ENCODE measurements at regions of chr6 and their contacts with region 1.

Region 1: GRCh38 chr6:52227495-52227894 is 16.8 kb downstream of the IL17F start:
- DNase-seq: peak; percentile 90
- H3K4me3 Mint-ChIP-seq: peak overlapping the region; percentile 27
- H3K27ac Mint-ChIP-seq: peak overlapping the region; percentile 32
- H3K4me1 Mint-ChIP-seq: peaks cover 46% of the 10 kb centered on the region
- H3K27me3 Mint-ChIP-seq: peaks cover 47% of the 10 kb centered on the region

Region 2: DNA sequence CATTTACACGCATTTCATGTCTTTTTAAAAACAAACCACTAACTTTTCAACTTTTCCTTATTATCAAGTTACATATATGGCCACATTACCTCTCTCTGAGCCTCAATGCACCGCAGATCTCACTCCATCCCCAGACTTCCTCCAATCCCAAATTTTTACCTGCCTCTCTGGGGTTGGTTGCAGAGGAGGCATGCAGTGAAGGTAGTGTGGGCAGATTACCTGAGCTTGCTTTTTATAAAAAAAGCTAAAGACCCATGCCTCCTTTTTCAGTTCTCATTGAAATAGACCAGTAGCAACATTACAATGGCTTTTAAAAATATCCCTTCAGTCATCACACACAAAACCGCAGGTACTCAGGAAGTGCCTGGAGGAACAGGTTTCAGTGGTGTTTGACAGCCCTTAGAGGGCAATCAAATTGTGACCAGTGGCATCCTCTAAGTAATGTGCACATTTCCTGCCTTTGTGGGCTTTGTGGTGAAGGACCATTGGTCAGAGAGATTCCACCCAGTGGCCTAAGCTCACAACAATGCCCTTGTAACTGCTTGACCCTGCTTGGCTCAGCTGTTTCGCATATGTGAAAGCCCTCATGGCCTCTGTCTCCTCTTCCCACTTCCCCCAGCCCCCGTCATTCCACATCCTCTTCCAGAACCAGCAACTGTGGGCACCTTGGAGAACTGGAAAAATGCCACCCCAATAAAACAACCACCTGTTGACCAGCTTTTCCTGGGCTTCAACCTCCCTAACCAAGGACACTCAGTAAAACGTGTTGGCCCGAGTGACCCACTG is 71.5 kb before region 1 on chr6:
- intact Hi-C with region 1: loop called (anchors 1 kb)
- DNase-seq: no peak
- H3K4me3 Mint-ChIP-seq: no peak overlapping the region
- H3K27ac Mint-ChIP-seq: peak overlapping the region; percentile 8
- H3K4me1 Mint-ChIP-seq: peaks cover 21% of the 10 kb centered on the region
- H3K27me3 Mint-ChIP-seq: peaks cover 15% of the 10 kb centered on the region

Region 3: DNA sequence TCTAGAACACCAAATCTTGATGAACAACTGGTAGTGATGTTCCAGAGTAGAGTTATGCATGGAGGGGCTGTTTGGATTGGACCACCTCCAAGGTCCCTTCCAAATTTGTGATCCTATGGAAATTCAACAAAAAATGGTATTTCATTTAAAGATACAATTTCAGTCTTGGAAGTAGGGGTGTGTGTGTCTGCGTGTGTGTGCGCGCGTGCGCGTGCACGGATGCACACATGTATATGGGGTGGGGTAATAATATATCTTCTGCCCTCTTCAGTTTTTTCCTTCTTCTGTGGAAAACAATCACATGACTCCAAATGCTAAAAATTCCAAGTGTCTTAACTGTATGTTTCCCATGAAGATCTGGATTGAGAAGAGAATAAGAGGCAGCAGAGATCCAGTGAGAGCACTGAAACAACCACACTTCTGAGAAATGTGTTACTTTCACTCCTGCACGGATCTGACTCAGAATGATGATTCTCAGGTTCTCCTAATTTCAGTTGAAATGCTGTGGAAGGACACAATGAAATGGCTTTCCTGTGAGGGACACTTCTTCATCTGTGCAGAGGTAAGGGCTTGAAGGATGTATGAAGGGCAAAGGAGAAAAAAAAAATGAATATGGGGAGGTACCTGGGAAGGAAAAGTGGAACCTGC is 27.4 kb after region 1 on chr6:
- intact Hi-C with region 1: loop called (anchors 1 kb)
- DNase-seq: no peak
- H3K4me3 Mint-ChIP-seq: peak overlapping the region; percentile 18
- H3K27ac Mint-ChIP-seq: no peak overlapping the region
- H3K4me1 Mint-ChIP-seq: peaks cover 35% of the 10 kb centered on the region
- H3K27me3 Mint-ChIP-seq: peaks cover 40% of the 10 kb centered on the region

Region 4: GRCh38 chr6:52389626-52390360 is 162.3 kb after region 1 on chr6:
- intact Hi-C with region 1: loop called (anchors 1 kb)
- DNase-seq: peak; percentile 87
- H3K4me3 Mint-ChIP-seq: peak overlapping the region; percentile 66
- H3K27ac Mint-ChIP-seq: peak overlapping the region; percentile 85
- H3K4me1 Mint-ChIP-seq: peaks cover 59% of the 10 kb centered on the region
- H3K27me3 Mint-ChIP-seq: no peaks in the 10 kb centered on the region

Measured in activated CD4-positive, alpha-beta T cell treated with anti-CD3 and anti-CD28 coated beads, Interleukin-2, amount 10 ng/mL, durations not matched to agents 24 days and 14 days (primary cell).